ENCODE measurements at regions of chr17 and their contacts with region 1.

Region 1: DNA sequence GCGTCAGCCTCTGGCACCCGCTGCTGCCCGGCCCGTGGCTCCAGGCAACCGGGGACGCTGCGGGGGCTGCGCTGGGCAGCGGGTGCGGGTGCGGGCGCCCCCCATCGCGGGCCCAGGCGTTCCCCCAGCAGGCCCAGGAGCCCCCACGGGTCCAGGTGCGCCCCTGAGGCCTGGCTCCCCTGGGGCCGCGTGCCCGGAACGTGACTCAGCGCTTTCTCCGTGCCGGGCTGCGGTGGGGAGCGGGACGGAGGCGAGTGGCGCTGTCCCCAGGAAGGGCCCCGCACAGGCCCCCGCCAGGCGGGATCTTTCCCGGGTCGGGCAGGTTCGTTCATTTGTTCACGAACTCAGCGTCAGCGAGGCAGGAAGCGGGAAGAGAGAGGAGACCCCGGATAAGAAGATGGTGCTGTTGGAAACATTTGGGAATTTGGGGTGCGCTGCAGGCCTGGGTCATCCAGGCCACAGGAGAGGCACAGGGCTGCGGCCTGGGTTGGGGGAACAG is 18.4 kb upstream of the EXOC7 start:
- DNase-seq: no peak
- ATAC-seq: peak; percentile 33
- H3K4me3 ChIP-seq: peak overlapping the region; percentile 63
- H3K4me3 Mint-ChIP-seq: peak overlapping the region in 7 of 10 donors; percentile 25 to 77 (median 53)
- H3K27ac ChIP-seq: peak overlapping the region; percentile 52
- H3K27ac Mint-ChIP-seq: peak overlapping the region; percentile 40 to 91 (median 73)
- H3K4me1 ChIP-seq: peaks cover 0 to 25% of the 10 kb centered on the region in 2 donors
- H3K4me1 Mint-ChIP-seq: peaks cover 10 to 39% (median 27%) of the 10 kb centered on the region in 7 donors
- H3K27me3 ChIP-seq: no peaks in the 10 kb centered on the region
- H3K27me3 Mint-ChIP-seq: no peaks in the 10 kb centered on the region

Region 2: DNA sequence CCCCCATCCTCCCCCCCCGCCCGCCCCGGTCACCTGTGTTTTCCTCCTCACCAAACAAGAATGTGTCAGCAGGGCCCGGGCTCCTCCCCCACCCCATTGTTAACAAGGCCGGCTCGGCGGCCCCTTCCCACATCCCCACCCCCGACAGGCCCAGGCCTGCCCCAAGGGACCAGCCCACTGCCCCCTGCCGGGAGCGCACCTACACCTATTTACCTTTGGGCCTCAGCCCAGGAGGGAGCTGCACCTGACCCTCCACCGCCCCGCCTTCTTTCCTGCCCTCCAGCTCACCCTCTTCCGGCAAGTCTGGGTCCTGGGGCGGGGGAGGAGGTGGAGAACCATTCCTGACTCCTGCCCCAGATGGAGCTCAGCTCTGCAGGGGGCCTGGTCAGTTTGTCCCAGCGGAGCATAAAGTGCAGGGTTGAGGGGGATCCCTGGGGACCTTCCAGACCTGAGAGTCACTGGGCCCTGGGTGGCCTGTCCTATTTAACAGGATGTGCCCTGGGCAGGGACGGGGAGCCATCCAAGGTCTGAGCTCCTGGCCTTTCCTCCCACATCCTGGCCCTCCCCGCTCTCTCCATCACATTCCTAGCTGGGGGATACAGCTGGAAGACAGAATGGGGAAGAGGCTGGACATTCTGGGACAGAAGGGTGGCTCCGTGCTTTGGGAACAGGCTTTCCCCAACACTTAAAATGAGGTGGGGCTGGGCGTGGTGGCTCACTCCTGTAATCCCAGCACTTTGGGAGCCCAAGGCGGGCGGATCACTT is 10.8 kb after region 1 on chr17:
- CTCF ChIA-PET with region 1: interaction called, 12 read pairs
- POLR2A ChIA-PET with region 1: interaction called, 4 read pairs
- intact Hi-C with region 1: no loop called
- DNase-seq: no peak
- ATAC-seq: no peak
- H3K4me3 ChIP-seq: no peak overlapping the region
- H3K4me3 Mint-ChIP-seq: no peak overlapping the region
- H3K27ac ChIP-seq: no peak overlapping the region
- H3K27ac Mint-ChIP-seq: no peak overlapping the region
- H3K4me1 ChIP-seq: peaks cover 0 to 13% of the 10 kb centered on the region in 2 donors
- H3K4me1 Mint-ChIP-seq: peaks cover 14 to 24% (median 16%) of the 10 kb centered on the region in 7 donors
- H3K27me3 ChIP-seq: no peaks in the 10 kb centered on the region
- H3K27me3 Mint-ChIP-seq: peaks cover 0 to 2% (median 0%) of the 10 kb centered on the region in 5 donors

Region 3: GRCh38 chr17:76271669-76272540 is 149.9 kb after region 1 on chr17:
- CTCF ChIA-PET with region 1: interaction called, 36 read pairs
- POLR2A ChIA-PET with region 1: interaction called, 12 read pairs
- intact Hi-C with region 1: no loop called
- DNase-seq: peak in 6 of 9 donors; percentile 53 to 79 (median 61)
- ATAC-seq: peak; percentile 54
- H3K4me3 ChIP-seq: peak overlapping the region; percentile 68
- H3K4me3 Mint-ChIP-seq: peak overlapping the region; percentile 75 to 93 (median 82)
- H3K27ac ChIP-seq: peak overlapping the region; percentile 92
- H3K27ac Mint-ChIP-seq: peak overlapping the region; percentile 82 to 94 (median 92)
- H3K4me1 ChIP-seq: peaks cover 65 to 70% of the 10 kb centered on the region in 2 donors
- H3K4me1 Mint-ChIP-seq: peaks cover 37 to 75% (median 71%) of the 10 kb centered on the region in 7 donors
- H3K27me3 ChIP-seq: no peaks in the 10 kb centered on the region
- H3K27me3 Mint-ChIP-seq: peaks cover 0 to 3% (median 0%) of the 10 kb centered on the region in 5 donors

Region 4: DNA sequence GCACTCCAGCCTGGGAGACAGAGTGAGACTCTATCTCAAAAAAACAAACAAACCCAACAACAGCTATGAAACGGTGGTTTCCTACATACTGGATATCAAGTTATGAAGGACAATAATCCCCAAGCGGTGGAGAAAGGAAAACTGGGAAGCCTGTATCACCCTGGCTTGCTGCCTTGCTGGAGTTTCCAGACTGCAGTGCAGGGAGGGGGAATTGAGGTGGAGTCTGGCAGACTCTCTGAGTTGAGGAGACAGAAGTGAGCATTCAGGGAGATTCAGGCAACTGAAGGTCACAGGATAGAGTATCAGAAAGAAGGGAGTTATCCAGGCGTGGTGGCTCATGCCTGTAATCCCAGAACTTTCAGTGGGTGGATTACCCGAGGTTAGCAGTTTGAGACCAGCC is 174.2 kb after region 1 on chr17:
- CTCF ChIA-PET with region 1: interaction called, 20 read pairs
- POLR2A ChIA-PET with region 1: interaction called, 3 read pairs
- intact Hi-C with region 1: loop called (anchors 1 to 5 kb)
- DNase-seq: no peak
- ATAC-seq: no peak
- H3K4me3 ChIP-seq: no peak overlapping the region
- H3K4me3 Mint-ChIP-seq: no peak overlapping the region
- H3K27ac ChIP-seq: no peak overlapping the region
- H3K27ac Mint-ChIP-seq: no peak overlapping the region
- H3K4me1 ChIP-seq: peaks cover 0 to 4% of the 10 kb centered on the region in 2 donors
- H3K4me1 Mint-ChIP-seq: peaks cover 0 to 4% (median 3%) of the 10 kb centered on the region in 7 donors
- H3K27me3 ChIP-seq: no peaks in the 10 kb centered on the region
- H3K27me3 Mint-ChIP-seq: no peaks in the 10 kb centered on the region

Measured in naive thymus-derived CD4-positive, alpha-beta T cell (primary cell).